Activated CD4-positive, alpha-beta memory T cell treated with anti-CD3 and anti-CD28 coated beads for 36 hours (primary cell): ENCODE measurements at regions of chr5 and their contacts with region 1.

Region 1: GRCh38 chr5:112968411-112969106 is 8.0 kb upstream of the DCP2 start:
- DNase-seq: no peak
- H3K4me3 Mint-ChIP-seq: no peak overlapping the region
- H3K27ac Mint-ChIP-seq: no peak overlapping the region
- H3K4me1 Mint-ChIP-seq: peaks cover 45% of the 10 kb centered on the region
- H3K27me3 Mint-ChIP-seq: no peaks in the 10 kb centered on the region

Region 2: DNA sequence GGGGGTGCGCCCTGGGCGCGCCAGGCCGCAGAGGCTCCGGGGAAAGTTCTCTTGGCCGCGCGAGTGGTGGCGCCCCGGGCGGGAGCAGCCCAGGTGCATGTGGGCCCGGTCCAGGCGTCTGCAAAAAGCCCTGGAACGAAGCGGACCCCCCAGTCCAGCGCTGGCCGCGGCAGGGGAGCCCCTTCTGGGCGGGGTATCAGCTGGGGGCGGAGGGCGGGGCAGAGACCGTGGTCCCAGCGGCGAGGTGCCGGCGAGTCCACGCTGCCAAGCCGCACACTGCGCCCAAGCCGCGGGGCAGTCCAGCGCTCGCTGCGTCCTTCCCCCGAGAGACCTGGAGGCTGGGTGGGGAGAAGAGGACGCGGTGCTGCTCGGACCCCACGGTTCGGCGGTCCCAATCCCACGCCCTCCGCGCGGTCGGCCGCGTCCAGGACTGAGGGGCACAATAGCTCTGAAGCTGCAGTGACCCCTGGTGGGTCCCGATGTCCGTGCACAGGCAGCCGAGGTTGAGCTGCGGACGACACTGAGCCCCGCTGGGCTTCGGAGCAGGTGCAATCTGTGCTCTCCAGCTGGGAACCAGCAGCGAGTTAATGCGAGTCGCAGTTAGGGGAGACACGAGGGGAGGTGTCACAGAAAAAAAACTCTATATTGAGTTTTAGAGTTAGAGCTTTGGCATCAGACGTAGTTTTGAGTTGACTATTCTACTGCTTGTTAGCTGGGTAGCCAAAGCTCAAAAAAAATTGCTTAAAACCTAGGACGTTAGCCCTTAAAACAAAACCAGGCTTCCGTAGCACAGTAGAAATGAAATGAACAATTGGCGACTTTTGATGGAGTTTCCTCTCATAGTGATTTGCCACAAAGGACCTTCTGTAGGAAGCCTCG is 548.3 kb before region 1 on chr5:
- CTCF ChIA-PET with region 1: no interaction called
- POLR2A ChIA-PET with region 1: no interaction called
- intact Hi-C with region 1: loop called (anchors 10 kb)
- DNase-seq: peak; percentile 67
- H3K4me3 Mint-ChIP-seq: peak overlapping the region; percentile 61
- H3K27ac Mint-ChIP-seq: no peak overlapping the region
- H3K4me1 Mint-ChIP-seq: peaks cover 10% of the 10 kb centered on the region
- H3K27me3 Mint-ChIP-seq: peaks cover 40% of the 10 kb centered on the region

Region 3: DNA sequence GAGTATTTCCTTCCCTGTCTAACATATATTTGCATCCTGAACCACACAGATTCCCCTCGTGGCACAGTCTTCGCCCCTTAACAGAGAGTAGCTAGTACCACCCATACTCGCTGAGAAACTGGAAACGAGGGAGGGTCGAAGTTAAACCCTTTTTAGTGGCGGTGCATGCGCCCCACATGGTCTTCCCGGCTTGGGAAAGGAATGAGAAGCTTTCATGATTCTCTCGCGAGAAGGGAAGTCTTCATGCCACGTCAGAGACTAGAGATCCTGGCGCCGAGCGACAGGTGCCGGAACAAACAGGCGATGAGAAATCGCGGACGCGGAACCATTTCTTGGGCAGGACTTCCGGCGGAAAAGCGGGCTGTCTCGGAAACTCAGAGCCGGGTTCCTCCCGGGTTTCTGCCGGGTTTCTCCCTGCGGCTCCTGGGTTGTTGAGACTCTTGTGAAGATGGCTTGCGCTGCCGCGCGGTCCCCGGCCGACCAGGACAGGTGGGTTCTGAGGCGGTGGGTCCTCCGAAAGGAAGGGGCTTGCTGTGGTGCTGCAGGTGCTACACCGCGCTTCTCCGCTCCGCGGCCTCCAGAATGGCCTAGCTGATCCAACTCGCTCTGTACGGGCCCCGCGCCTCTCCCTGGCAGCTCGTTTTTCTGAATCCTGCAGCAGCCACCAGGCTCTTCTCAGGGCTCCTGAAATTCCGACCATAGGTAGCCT is 107.5 kb before region 1 on chr5 and contains the start of gene SRP19:
- CTCF ChIA-PET with region 1: interaction called, 3 read pairs
- POLR2A ChIA-PET with region 1: interaction called, 3 read pairs
- intact Hi-C with region 1: loop called (anchors 1 kb)
- DNase-seq: peak; percentile 95
- H3K4me3 Mint-ChIP-seq: peak within 1 kb of the TSS; percentile 86
- H3K27ac Mint-ChIP-seq: peak within 1 kb of the TSS; percentile 95
- H3K4me1 Mint-ChIP-seq: peaks cover 33% of the 10 kb centered on the region
- H3K27me3 Mint-ChIP-seq: peaks cover 3% of the 10 kb centered on the region
- total RNA-seq, gene SRP19: 49.1 to 51.6 TPM

Region 4: GRCh38 chr5:112885001-112885400 is 83.6 kb before region 1 on chr5:
- CTCF ChIA-PET with region 1: no interaction called
- POLR2A ChIA-PET with region 1: no interaction called
- intact Hi-C with region 1: no loop called
- DNase-seq: no peak
- H3K4me3 Mint-ChIP-seq: no peak overlapping the region
- H3K27ac Mint-ChIP-seq: no peak overlapping the region
- H3K4me1 Mint-ChIP-seq: peaks cover 29% of the 10 kb centered on the region
- H3K27me3 Mint-ChIP-seq: no peaks in the 10 kb centered on the region

Region 5: GRCh38 chr5:112929326-112930081 is 39.1 kb before region 1 on chr5:
- CTCF ChIA-PET with region 1: no interaction called
- POLR2A ChIA-PET with region 1: no interaction called
- intact Hi-C with region 1: loop called (anchors 1 kb)
- DNase-seq: no peak
- H3K4me3 Mint-ChIP-seq: peak overlapping the region; percentile 37
- H3K27ac Mint-ChIP-seq: peak overlapping the region; percentile 78
- H3K4me1 Mint-ChIP-seq: peaks cover 47% of the 10 kb centered on the region
- H3K27me3 Mint-ChIP-seq: no peaks in the 10 kb centered on the region

Region 6: DNA sequence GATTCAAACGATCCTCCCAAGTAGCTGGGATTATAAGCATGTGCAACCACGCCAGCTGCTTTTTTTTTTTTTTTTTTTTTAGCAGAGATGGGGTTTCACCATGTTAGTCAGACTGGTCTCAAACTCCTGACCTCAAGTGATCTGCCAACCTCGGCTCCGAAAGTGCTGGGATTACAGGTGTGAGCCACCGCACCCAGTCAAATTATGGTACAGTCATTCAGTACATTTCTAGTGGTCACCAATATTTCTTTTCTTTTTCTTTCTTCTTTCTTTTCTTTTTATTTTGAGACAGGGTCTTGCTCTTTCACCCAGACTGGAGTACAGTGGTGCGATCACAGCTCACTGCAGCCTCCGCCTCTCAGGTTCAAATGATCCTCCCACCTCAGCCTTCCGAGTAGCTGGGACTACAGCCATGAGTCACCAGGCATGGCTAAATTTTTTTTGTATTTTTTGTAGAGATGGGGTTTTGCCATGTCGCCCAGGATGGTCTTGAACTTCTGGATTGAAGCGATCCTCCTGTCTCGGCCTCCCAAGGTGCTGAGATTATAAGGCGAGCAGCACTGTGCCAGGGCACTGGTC is 17.3 kb before region 1 on chr5:
- CTCF ChIA-PET with region 1: interaction called, 5 read pairs
- POLR2A ChIA-PET with region 1: interaction called, 5 read pairs
- intact Hi-C with region 1: loop called (anchors 1 kb)
- DNase-seq: peak; percentile 81
- H3K4me3 Mint-ChIP-seq: peak overlapping the region; percentile 29
- H3K27ac Mint-ChIP-seq: no peak overlapping the region
- H3K4me1 Mint-ChIP-seq: peaks cover 14% of the 10 kb centered on the region
- H3K27me3 Mint-ChIP-seq: no peaks in the 10 kb centered on the region